Colonic mucosa (tissue), 4 donors: ENCODE measurements at regions of chr4 and their contacts with region 1.

Region 1: DNA sequence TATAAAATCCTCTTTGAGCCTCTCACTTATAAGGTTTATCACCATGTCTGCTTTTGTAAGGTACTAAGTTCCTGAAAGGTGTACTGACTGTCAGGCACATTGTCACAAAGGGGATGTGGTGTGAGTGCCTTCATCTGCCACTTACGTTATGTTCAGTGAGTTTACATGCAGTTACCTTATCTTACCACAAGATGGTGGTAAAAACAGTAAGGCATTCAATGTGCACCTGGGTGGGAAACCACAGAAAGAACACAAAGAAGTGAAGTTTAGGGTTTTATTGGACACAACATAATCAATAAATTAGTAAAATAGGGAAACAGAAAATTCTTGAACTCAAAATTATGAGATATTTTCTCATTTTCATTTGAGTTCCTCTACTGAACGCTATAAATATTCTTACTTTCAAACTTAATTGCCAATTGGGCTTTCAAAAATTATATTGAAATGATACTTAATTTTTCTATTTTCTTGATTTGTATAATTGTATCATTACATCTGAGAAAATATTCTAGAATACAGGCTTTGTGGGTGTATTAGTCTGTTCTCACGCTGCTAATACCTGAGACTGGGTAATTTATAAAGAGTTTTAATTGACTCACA is 650.8 kb downstream of the PCDH7 start:
- DNase-seq: no peak
- H3K4me3 ChIP-seq: no peak overlapping the region
- H3K27ac ChIP-seq: no peak overlapping the region
- H3K4me1 ChIP-seq: no peaks in the 10 kb centered on the region
- H3K27me3 ChIP-seq: no peaks in the 10 kb centered on the region
- CTCF ChIP-seq: peak; percentile 65

Region 2: DNA sequence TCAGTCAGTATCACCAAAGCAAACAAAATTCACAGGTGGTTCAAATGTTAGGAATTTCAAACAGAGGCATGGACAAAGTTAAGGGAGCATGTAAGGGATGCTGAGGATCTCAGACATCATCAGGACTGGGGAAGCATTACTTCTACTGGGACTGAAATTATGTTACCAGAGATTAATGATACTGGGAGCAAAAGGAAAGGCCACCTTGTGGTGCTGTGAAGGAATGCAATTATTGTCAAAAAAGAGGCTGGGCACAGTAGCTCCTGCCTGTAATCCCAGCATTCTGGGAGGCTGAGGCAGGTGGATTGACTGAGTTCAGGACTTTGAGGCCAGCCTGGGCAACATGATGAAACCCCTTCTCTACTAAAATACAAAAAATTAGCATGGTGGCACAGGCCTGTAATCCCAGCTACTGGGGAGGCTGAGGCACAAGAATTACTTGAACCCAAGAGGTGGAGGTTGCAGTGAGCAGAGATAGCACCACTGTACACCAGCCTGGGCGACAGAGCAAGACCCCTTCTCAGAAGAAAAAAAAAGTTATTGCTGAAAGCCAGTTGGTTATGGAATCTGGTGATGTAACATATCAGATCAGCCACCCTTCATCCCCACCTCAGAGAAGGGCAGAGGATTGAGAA is 303.5 kb after region 1 on chr4:
- intact Hi-C with region 1: loop called (anchors 10 kb)
- DNase-seq: no peak
- H3K4me3 ChIP-seq: no peak overlapping the region
- H3K27ac ChIP-seq: no peak overlapping the region
- H3K4me1 ChIP-seq: no peaks in the 10 kb centered on the region
- H3K27me3 ChIP-seq: no peaks in the 10 kb centered on the region
- CTCF ChIP-seq: peak; percentile 36